Heart right ventricle (tissue), 16 donors: ENCODE measurements at regions of chr12 and their contacts with region 1.

Region 1: DNA sequence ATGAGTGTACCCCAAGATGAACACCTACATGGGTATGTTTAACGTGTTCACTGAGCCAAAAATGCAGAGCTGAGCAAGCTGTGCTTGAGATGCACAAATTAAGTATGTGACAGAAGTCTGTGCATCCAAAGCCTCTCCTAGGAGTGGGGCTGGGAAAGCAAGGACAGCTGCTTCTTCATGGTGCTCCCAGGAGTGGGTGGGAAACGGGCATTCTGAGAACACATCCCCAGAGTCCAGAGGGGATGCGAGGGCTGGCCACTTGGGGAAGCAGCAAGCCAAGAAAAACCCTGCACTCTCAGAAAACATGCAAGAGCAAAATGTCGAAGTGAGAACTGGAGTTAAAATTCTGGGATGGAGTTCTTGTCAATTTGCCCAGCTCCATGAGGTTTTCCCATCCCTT is 414.3 kb downstream of the BCAT1 start:
- DNase-seq: peak; percentile 45 to 59
- ATAC-seq: peak in 7 of 8 donors; percentile 55 to 85 (median 74)
- H3K4me3 ChIP-seq: no peak overlapping the region
- H3K27ac ChIP-seq: peak overlapping the region in 3 of 10 donors; percentile 13 to 32 (median 31)
- H3K4me1 ChIP-seq: peaks cover 0 to 31% (median 4%) of the 10 kb centered on the region in 9 donors
- H3K27me3 ChIP-seq: no peaks in the 10 kb centered on the region
- CTCF ChIP-seq: peak in 1 of 9 donors; percentile 13

Region 2: DNA sequence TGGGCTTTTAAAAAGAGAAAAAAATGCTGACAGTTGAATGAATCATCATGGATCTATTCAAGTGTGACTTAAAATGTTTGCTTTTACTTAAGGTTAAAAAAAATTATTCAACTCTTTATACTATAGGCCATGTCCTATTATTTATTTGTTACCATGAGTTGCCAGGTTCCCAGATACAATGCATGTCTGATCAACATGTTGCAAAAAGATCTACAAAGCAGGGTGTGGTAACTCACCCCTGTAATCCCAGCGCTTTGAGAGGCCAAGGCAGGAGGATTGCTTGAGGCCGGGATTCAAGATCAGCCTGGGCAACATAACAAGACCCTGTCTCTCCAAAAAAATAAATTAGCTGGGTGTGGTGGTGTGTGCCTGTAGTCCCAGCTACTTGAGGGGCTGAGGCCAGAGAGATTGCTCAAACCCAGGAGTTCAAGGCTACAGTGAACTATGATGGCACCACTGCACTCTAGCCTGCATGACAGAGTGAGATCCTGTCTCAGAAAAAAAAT is 46.5 kb before region 1 on chr12:
- intact Hi-C with region 1: loop called in 1 of 10 experiments (anchors 10 kb)
- DNase-seq: no peak
- ATAC-seq: no peak
- H3K4me3 ChIP-seq: no peak overlapping the region
- H3K27ac ChIP-seq: no peak overlapping the region
- H3K4me1 ChIP-seq: peaks cover 0 to 9% (median 0%) of the 10 kb centered on the region in 9 donors
- H3K27me3 ChIP-seq: no peaks in the 10 kb centered on the region
- CTCF ChIP-seq: no peak

Region 3: GRCh38 chr12:24561882-24562760 is 27.5 kb after region 1 on chr12:
- intact Hi-C with region 1: loop called in 1 of 10 experiments (anchors 1 kb)
- DNase-seq: peak; percentile 48 to 69
- ATAC-seq: peak; percentile 82 to 89 (median 85)
- H3K4me3 ChIP-seq: peak overlapping the region; percentile 59 to 80 (median 72)
- H3K27ac ChIP-seq: peak overlapping the region; percentile 29 to 82 (median 78)
- H3K4me1 ChIP-seq: peaks cover 0 to 19% (median 7%) of the 10 kb centered on the region in 9 donors
- H3K27me3 ChIP-seq: peaks cover 0 to 58% (median 23%) of the 10 kb centered on the region in 7 donors
- CTCF ChIP-seq: no peak